ENCODE measurements at regions of chr21 and their contacts with region 1.

Region 1: DNA sequence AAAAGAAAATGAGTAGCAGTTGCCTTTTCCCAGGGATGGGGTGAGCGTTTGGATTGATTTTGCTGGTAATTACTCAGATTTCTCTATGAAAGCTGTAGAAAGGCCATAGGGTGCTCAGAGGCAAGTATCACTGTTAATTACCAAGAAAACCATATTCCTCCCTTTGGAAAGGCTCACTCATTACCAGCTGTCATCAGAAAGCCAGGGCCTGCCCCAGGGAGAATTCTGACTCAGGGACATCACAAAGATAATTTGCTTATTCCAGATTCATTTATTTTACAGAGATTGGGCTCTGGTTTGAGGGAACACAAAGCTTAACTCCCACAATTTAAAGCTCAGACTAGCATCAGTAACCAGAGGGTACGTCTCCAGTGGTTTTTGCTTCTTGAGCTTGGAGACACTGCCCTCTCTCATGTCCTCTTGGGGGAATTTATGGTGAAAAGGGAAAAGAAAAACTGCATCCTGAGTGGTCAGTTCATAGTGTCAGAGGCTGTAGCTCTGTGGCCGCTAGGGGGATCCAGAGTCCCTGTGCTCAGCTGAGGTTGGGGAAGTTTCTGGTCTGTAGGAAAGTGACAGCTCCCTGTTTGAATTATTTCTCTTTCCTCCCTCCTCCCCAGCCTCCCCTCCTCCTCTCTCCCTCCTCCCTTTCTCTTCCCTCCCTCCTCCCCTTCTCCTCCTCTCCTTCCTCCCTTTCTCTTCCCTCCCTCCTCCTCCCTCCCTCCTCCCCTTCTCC is 204.3 kb downstream of the KCNJ6 start:
- DNase-seq: peak; percentile 57
- H3K4me3 ChIP-seq: no peak overlapping the region
- H3K27ac ChIP-seq: no peak overlapping the region
- H3K4me1 ChIP-seq: no peaks in the 10 kb centered on the region
- H3K27me3 ChIP-seq: no peaks in the 10 kb centered on the region
- CTCF ChIP-seq: peak; percentile 91 to 92

Region 2: GRCh38 chr21:37799211-37800056 is 87.4 kb after region 1 on chr21:
- CTCF ChIA-PET with region 1: no interaction called
- dilution Hi-C with region 1: loop called (anchors 5 kb)
- in situ Hi-C with region 1: no loop called
- intact Hi-C with region 1: no loop called
- DNase-seq: no peak
- H3K4me3 ChIP-seq: no peak overlapping the region
- H3K27ac ChIP-seq: no peak overlapping the region
- H3K4me1 ChIP-seq: no peaks in the 10 kb centered on the region
- H3K27me3 ChIP-seq: no peaks in the 10 kb centered on the region
- CTCF ChIP-seq: no peak

Region 3: GRCh38 chr21:38126669-38127303 is 414.8 kb after region 1 on chr21:
- CTCF ChIA-PET with region 1: interaction called, 5 read pairs
- dilution Hi-C with region 1: no loop called
- in situ Hi-C with region 1: loop called (anchors 10 to 25 kb)
- intact Hi-C with region 1: loop called (anchors 1 kb)
- DNase-seq: peak; percentile 53
- H3K4me3 ChIP-seq: no peak overlapping the region
- H3K27ac ChIP-seq: no peak overlapping the region
- H3K4me1 ChIP-seq: no peaks in the 10 kb centered on the region
- H3K27me3 ChIP-seq: no peaks in the 10 kb centered on the region
- CTCF ChIP-seq: peak; percentile 89 to 94

Region 4: DNA sequence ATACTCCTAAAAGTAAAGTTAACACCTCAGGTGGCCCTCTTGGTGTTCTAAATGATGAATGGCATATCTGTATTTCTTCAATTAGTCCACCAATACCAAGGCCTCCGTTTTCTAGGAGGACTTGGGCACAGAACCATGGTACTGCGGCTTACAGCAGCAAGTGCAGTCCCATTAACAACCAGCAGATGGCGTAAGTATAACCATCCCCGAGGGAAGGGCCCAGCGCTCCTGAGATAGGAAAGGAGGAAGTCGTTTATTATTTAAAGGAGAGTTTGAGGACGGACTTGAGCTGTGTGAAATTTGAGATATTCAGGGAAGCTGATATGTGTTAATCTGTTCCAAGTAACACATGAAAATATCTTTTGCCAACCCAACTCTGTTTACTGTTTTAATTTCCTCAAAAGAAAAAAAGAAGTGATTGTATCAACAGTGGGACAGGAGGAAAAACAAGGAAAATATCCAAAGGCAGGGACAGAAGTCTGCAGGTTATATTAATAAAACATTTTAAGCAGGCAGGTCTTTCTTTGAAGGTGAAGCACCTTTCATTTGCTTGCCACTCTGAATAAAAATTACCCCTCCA is 507.1 kb after region 1 on chr21:
- CTCF ChIA-PET with region 1: no interaction called
- dilution Hi-C with region 1: no loop called
- in situ Hi-C with region 1: no loop called
- intact Hi-C with region 1: loop called (anchors 2 kb)
- DNase-seq: peak; percentile 63
- H3K4me3 ChIP-seq: no peak overlapping the region
- H3K27ac ChIP-seq: no peak overlapping the region
- H3K4me1 ChIP-seq: peaks cover 4% of the 10 kb centered on the region
- H3K27me3 ChIP-seq: no peaks in the 10 kb centered on the region
- CTCF ChIP-seq: peak; percentile 96 to 99